CD8-positive, alpha-beta T cell (primary cell): ENCODE measurements at regions of chr9 and their contacts with region 1.

Region 1: DNA sequence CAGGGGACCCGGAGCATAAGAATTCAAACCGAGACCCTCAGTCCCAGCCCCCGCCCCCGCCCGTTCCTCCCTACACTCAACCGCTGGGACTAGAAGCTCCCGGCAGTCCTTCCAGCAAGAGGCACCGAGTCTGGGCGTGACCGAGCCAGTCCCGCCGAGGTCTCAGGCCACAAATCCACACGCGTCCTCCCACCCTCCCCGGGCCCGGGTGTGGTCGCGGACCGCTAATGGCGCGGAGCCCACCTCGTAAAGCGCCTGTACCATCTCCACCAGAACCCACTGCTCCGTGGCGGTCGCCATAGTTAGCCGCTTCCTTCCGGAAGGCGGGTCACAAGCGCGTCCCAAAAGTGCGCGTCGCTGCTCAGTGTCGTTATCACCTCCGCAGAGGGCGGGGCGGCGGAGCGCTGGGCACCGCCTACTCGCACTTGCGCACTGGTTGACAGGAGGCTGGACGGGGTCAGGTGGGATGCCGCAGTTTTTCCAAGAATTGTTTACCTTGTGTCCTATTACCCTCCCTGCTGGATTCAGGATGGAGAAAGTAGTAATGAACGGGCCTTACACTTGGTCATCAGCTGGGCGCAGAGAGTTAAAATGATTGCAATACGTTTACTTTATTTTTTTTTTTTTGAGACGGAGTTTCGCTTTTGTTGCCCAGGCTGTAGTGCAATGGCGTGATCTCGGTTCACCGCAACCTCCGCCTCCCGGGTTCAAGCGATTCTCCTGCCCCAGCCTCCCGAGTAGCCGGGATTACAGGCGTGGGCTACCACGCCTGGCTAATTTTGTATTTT is at the start of gene SPTLC1:
- DNase-seq: peak; percentile 90 to 97 (median 94)
- ATAC-seq: peak; percentile 98
- H3K4me3 ChIP-seq: peak within 1 kb of the TSS; percentile 64 to 88
- H3K4me3 Mint-ChIP-seq: peak within 1 kb of the TSS; percentile 100
- H3K27ac ChIP-seq: peak within 1 kb of the TSS; percentile 89 to 91
- H3K27ac Mint-ChIP-seq: peak within 1 kb of the TSS; percentile 99
- H3K4me1 ChIP-seq: peaks cover 14% of the 10 kb centered on the region
- H3K4me1 Mint-ChIP-seq: peaks cover 41% of the 10 kb centered on the region
- H3K27me3 ChIP-seq: no peaks in the 10 kb centered on the region
- H3K27me3 Mint-ChIP-seq: no peaks in the 10 kb centered on the region
- CTCF ChIP-seq: no peak
- total RNA-seq, gene SPTLC1: 41.4 to 41.9 TPM

Region 2: DNA sequence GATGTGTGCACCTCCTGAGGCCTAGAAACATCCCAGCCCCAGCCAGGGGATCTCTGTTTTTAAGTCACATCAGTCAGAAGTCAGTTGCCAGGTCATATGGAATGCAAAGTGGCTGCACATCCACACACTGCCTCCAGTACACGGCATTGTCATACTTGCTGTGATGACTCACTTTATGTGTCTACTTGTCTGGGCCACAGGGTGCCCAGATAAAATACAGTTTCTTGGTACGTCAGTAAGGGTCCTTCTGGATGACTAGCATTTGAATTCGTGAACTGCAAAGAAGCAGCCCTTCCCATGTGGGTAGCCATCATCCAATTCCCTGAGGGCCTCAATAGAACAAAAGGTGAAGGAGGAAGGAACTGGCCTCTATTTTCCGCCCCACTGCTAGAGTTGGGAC is 781.2 kb before region 1 on chr9:
- CTCF ChIA-PET with region 1: no interaction called
- POLR2A ChIA-PET with region 1: no interaction called
- intact Hi-C with region 1: no loop called
- DNase-seq: no peak
- ATAC-seq: no peak
- H3K4me3 ChIP-seq: no peak overlapping the region
- H3K4me3 Mint-ChIP-seq: no peak overlapping the region
- H3K27ac ChIP-seq: no peak overlapping the region
- H3K27ac Mint-ChIP-seq: no peak overlapping the region
- H3K4me1 ChIP-seq: no peaks in the 10 kb centered on the region
- H3K4me1 Mint-ChIP-seq: peaks cover 12% of the 10 kb centered on the region
- H3K27me3 ChIP-seq: no peaks in the 10 kb centered on the region
- H3K27me3 Mint-ChIP-seq: no peaks in the 10 kb centered on the region
- CTCF ChIP-seq: no peak

Region 3: GRCh38 chr9:91795598-91796241 is 319.5 kb before region 1 on chr9:
- CTCF ChIA-PET with region 1: no interaction called
- POLR2A ChIA-PET with region 1: no interaction called
- intact Hi-C with region 1: loop called in 1 of 2 experiments (anchors 5 kb)
- DNase-seq: no peak
- ATAC-seq: no peak
- H3K4me3 ChIP-seq: no peak overlapping the region
- H3K4me3 Mint-ChIP-seq: no peak overlapping the region
- H3K27ac ChIP-seq: no peak overlapping the region
- H3K27ac Mint-ChIP-seq: no peak overlapping the region
- H3K4me1 ChIP-seq: peaks cover 6% of the 10 kb centered on the region
- H3K4me1 Mint-ChIP-seq: peaks cover 17% of the 10 kb centered on the region
- H3K27me3 ChIP-seq: no peaks in the 10 kb centered on the region
- H3K27me3 Mint-ChIP-seq: peaks cover 4% of the 10 kb centered on the region
- CTCF ChIP-seq: no peak

Region 4: DNA sequence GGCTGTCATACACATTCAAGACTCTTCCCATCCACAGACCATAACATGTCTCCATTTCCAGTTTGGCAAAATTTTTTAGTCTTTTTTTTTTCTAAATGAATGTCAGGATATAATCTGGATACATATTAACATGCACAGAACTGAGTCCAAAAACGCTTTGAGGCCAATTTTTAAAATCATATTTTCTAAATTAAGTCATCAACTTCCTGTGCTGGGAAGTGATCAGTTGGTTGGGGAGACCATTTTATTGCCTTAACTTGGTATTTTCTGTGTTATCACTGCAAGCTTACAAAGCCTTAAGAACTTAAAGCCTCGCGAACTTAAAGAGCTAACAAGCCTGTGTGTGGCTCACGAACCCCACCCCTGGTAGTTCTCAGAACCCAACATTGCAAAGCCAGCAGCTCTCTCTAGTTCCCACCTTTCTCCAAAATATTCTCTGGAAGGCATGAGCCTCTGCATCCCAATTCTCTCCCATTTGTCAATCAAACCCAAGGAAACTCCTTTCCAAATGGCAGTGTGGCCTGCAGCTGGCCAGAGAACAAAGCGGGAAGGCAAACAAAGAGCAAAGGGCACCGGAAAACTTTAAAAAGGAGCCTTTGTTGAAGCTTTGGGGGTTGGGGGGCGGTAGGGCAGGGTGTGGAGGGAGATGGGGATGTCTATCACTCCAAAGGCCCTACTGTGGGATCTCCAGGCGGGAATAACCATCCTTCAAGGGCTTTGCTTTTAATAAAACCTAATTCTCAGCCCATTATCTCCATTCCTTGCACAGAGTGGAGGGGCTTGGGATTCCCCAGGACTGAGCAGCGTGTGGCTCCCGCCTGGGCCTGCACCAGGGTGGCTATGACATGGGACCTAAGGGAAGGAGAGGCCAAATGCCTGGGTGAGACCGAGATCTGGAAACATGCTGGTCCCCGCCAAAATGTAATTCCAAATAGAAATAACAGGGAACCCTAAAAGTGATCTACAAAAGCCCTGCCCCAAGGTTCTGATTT is 230.3 kb before region 1 on chr9:
- CTCF ChIA-PET with region 1: no interaction called
- POLR2A ChIA-PET with region 1: no interaction called
- intact Hi-C with region 1: no loop called
- DNase-seq: no peak
- ATAC-seq: no peak
- H3K4me3 ChIP-seq: no peak overlapping the region
- H3K4me3 Mint-ChIP-seq: no peak overlapping the region
- H3K27ac ChIP-seq: no peak overlapping the region
- H3K27ac Mint-ChIP-seq: no peak overlapping the region
- H3K4me1 ChIP-seq: no peaks in the 10 kb centered on the region
- H3K4me1 Mint-ChIP-seq: no peaks in the 10 kb centered on the region
- H3K27me3 ChIP-seq: peaks cover 0 to 5% of the 10 kb centered on the region in 2 experiments
- H3K27me3 Mint-ChIP-seq: peaks cover 13% of the 10 kb centered on the region
- CTCF ChIP-seq: no peak

Region 5: GRCh38 chr9:92048924-92049625 is 66.2 kb before region 1 on chr9:
- CTCF ChIA-PET with region 1: no interaction called
- POLR2A ChIA-PET with region 1: no interaction called
- intact Hi-C with region 1: no loop called
- DNase-seq: no peak
- ATAC-seq: no peak
- H3K4me3 ChIP-seq: no peak overlapping the region
- H3K4me3 Mint-ChIP-seq: no peak overlapping the region
- H3K27ac ChIP-seq: no peak overlapping the region
- H3K27ac Mint-ChIP-seq: peak overlapping the region; percentile 16
- H3K4me1 ChIP-seq: no peaks in the 10 kb centered on the region
- H3K4me1 Mint-ChIP-seq: no peaks in the 10 kb centered on the region
- H3K27me3 ChIP-seq: no peaks in the 10 kb centered on the region
- H3K27me3 Mint-ChIP-seq: no peaks in the 10 kb centered on the region
- CTCF ChIP-seq: no peak

Region 6: DNA sequence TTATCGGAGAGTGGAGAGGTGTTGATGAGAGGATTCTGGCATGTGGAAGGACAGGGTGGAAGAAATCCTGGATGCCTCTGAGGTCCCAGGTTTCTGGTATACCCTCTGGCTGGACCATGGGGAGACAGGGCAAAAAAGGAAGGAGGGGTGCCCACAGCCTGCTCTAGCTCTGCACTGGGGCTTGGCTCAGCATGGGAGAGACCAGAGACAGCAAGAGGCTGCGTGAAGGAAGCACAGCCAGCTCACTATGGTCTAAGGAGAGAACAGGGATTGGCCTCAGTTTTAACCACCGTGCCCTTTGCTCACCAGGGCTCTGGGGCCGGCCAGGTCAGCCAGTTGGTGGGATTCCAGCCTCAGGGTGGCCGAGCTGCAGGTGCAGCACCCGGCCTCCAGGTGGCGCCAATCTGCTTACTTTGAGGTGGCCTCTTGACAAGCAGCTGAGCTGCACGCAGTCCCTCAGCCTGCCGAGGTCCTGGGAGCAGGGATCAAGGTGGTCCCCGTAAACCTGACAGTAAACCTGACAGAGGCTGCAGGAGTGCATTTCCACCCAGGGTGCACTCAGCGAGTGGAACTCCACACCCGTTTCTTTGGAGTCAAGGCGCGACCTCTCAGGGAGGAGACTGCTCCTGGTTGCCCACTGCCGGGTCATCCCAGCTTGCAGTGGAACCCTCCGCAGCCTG is 24.9 kb after region 1 on chr9:
- CTCF ChIA-PET with region 1: interaction called, 26 read pairs
- POLR2A ChIA-PET with region 1: no interaction called
- intact Hi-C with region 1: no loop called
- DNase-seq: peak; percentile 34 to 83 (median 71)
- ATAC-seq: peak; percentile 71
- H3K4me3 ChIP-seq: peak overlapping the region; percentile 8
- H3K4me3 Mint-ChIP-seq: peak overlapping the region; percentile 26
- H3K27ac ChIP-seq: no peak overlapping the region
- H3K27ac Mint-ChIP-seq: no peak overlapping the region
- H3K4me1 ChIP-seq: peaks cover 8% of the 10 kb centered on the region
- H3K4me1 Mint-ChIP-seq: peaks cover 8% of the 10 kb centered on the region
- H3K27me3 ChIP-seq: peaks cover 3 to 8% of the 10 kb centered on the region in 2 experiments
- H3K27me3 Mint-ChIP-seq: peaks cover 38% of the 10 kb centered on the region
- CTCF ChIP-seq: peak; percentile 95

Region 7: GRCh38 chr9:92325269-92325990 is 210.2 kb after region 1 on chr9 and contains the starts of genes CENPP and NOL8:
- CTCF ChIA-PET with region 1: no interaction called
- POLR2A ChIA-PET with region 1: interaction called, 6 read pairs
- intact Hi-C with region 1: loop called in 1 of 2 experiments (anchors 1 kb)
- DNase-seq: peak; percentile 70 to 93 (median 83)
- ATAC-seq: peak; percentile 92
- H3K4me3 ChIP-seq: peak within 1 kb of the TSS; percentile 81 to 84
- H3K4me3 Mint-ChIP-seq: peak within 1 kb of the TSS; percentile 99
- H3K27ac ChIP-seq: peak within 1 kb of the TSS; percentile 82 to 97
- H3K27ac Mint-ChIP-seq: peak within 1 kb of the TSS; percentile 99
- H3K4me1 ChIP-seq: peaks cover 18% of the 10 kb centered on the region
- H3K4me1 Mint-ChIP-seq: peaks cover 38% of the 10 kb centered on the region
- H3K27me3 ChIP-seq: no peaks in the 10 kb centered on the region
- H3K27me3 Mint-ChIP-seq: no peaks in the 10 kb centered on the region
- CTCF ChIP-seq: no peak
- total RNA-seq, gene CENPP: 2.8 to 4.6 TPM
- total RNA-seq, gene NOL8: 63.2 to 69.0 TPM

Region 8: DNA sequence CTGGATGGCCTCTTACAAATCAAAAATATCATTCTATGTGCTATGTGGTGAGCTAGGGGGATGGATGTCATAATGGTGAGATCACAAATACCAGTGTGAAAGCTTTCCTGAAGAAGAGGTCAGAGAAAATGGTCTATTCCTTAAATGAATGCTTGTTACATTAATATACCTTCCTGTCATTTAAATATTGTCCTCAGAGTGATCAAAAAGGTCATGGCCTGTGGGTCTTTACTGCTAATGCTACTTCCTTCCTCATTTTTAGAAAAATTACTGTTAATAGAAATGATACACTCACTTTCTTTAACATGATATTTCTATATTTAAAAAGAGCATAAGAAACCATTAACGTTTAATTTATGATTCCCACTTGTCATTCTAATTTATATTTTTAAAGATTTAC is 299.3 kb after region 1 on chr9:
- CTCF ChIA-PET with region 1: no interaction called
- POLR2A ChIA-PET with region 1: no interaction called
- intact Hi-C with region 1: no loop called
- DNase-seq: no peak
- ATAC-seq: no peak
- H3K4me3 ChIP-seq: no peak overlapping the region
- H3K4me3 Mint-ChIP-seq: no peak overlapping the region
- H3K27ac ChIP-seq: no peak overlapping the region
- H3K27ac Mint-ChIP-seq: no peak overlapping the region
- H3K4me1 ChIP-seq: no peaks in the 10 kb centered on the region
- H3K4me1 Mint-ChIP-seq: no peaks in the 10 kb centered on the region
- H3K27me3 ChIP-seq: no peaks in the 10 kb centered on the region
- H3K27me3 Mint-ChIP-seq: no peaks in the 10 kb centered on the region
- CTCF ChIP-seq: no peak

Region 9: DNA sequence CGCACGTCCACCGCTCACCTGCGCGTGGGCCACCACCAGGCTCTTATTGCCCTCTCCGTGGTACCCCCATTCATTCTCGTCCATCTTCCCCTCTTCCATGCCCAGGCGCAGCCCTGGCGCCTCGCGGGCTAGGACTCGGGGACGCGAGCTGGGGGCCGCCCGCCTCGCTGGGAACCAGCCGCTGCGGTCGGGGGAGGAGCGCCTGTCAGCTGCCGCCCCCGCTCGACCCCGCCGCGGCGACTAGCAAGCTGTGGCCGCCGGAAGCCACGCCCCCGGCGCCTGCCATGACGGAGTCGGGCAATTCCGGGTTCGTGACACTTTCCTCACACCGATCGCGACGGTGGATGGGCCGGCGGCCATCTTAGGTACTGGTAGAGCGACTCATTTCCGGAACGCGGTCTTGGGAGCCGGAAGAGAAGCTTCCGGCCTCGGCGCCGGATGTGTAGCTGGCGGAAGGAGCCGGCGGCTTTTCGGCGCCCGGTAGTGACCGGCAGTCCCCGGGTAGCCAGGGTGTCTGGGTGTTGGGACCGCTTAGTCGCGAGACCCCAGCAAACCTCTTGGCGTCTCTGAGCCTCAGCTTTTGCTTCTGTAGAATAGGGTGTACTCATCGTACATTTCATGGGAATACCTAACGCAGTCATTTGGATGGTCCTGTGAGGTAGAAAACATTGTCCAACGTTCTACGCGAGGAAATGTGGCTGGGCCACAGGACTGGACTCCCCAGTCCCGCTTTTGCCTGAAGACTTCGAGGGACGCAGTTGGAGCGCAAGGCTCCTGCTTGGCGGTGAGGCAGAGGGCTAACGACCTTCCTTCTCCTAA is 554.8 kb after region 1 on chr9 and contains the start of gene IPPK:
- CTCF ChIA-PET with region 1: no interaction called
- POLR2A ChIA-PET with region 1: no interaction called
- intact Hi-C with region 1: loop called in 1 of 2 experiments (anchors 1 kb)
- DNase-seq: peak; percentile 93 to 99 (median 96)
- ATAC-seq: peak; percentile 93
- H3K4me3 ChIP-seq: peak within 1 kb of the TSS; percentile 87 to 98
- H3K4me3 Mint-ChIP-seq: peak within 1 kb of the TSS; percentile 96
- H3K27ac ChIP-seq: peak within 1 kb of the TSS; percentile 96
- H3K27ac Mint-ChIP-seq: peak within 1 kb of the TSS; percentile 98
- H3K4me1 ChIP-seq: peaks cover 23% of the 10 kb centered on the region
- H3K4me1 Mint-ChIP-seq: peaks cover 39% of the 10 kb centered on the region
- H3K27me3 ChIP-seq: no peaks in the 10 kb centered on the region
- H3K27me3 Mint-ChIP-seq: no peaks in the 10 kb centered on the region
- CTCF ChIP-seq: no peak
- total RNA-seq, gene IPPK: 12.2 to 12.8 TPM

Region 10: DNA sequence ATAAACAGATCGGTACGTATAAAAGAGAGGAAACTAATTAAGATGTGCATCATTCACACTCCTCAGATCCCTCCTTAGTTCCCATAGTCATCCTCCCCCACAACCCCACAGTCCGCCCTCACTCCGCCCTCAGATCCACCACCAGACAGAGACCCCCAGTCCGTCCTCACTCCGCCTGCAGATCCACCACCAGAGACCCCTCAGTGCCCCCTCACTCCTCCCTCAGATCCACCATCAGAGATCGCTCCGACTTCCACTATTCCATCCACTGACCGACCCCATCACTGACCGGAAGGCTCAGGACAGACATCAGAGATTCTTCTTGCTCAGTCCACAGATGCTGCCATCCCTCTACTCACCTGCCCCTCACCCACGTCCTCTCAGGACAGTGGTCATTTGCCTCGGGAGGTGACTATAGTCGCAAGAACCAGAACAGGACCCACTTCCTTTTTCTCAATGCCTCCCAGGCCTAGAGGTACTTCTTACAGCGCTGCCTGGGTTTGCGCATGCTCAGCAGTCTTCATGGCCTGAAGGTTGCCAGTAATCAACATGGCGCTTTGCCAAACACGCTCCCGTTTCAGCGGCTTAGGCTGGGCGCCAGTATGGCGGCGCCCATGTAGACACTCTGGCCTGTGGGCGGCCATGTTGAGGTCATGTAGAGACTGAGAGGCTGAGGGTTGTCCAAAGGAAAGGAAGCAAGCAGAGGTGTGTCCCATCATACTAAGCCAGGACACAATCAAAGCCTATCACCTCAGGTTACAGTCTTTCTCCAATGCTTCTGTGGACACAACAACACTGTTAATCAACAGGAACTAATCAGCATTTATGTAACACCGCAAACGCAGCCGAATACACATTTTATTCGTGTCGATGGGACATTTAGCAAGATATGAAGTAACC is 762.5 kb after region 1 on chr9 and contains the start of gene ZNF484:
- CTCF ChIA-PET with region 1: no interaction called
- POLR2A ChIA-PET with region 1: no interaction called
- intact Hi-C with region 1: loop called in 1 of 2 experiments (anchors 5 kb)
- DNase-seq: peak; percentile 91 to 100 (median 98)
- ATAC-seq: peak; percentile 96
- H3K4me3 ChIP-seq: peak within 1 kb of the TSS; percentile 76 to 85
- H3K4me3 Mint-ChIP-seq: peak within 1 kb of the TSS; percentile 100
- H3K27ac ChIP-seq: peak within 1 kb of the TSS; percentile 81 to 90
- H3K27ac Mint-ChIP-seq: peak within 1 kb of the TSS; percentile 100
- H3K4me1 ChIP-seq: peaks cover 19% of the 10 kb centered on the region
- H3K4me1 Mint-ChIP-seq: peaks cover 48% of the 10 kb centered on the region
- H3K27me3 ChIP-seq: no peaks in the 10 kb centered on the region
- H3K27me3 Mint-ChIP-seq: no peaks in the 10 kb centered on the region
- CTCF ChIP-seq: no peak
- total RNA-seq, gene ZNF484: 18.4 to 18.7 TPM

Region 11: GRCh38 chr9:93444301-93444700 is 1329.0 kb after region 1 on chr9:
- CTCF ChIA-PET with region 1: no interaction called
- POLR2A ChIA-PET with region 1: no interaction called
- intact Hi-C with region 1: loop called in 1 of 2 experiments (anchors 10 kb)
- DNase-seq: no peak
- ATAC-seq: no peak
- H3K4me3 ChIP-seq: no peak overlapping the region
- H3K4me3 Mint-ChIP-seq: no peak overlapping the region
- H3K27ac ChIP-seq: no peak overlapping the region
- H3K27ac Mint-ChIP-seq: no peak overlapping the region
- H3K4me1 ChIP-seq: no peaks in the 10 kb centered on the region
- H3K4me1 Mint-ChIP-seq: peaks cover 8% of the 10 kb centered on the region
- H3K27me3 ChIP-seq: no peaks in the 10 kb centered on the region
- H3K27me3 Mint-ChIP-seq: no peaks in the 10 kb centered on the region
- CTCF ChIP-seq: no peak